Ovary (tissue), 10 donors: ENCODE measurements at regions of chr11 and their contacts with region 1.

Region 1: DNA sequence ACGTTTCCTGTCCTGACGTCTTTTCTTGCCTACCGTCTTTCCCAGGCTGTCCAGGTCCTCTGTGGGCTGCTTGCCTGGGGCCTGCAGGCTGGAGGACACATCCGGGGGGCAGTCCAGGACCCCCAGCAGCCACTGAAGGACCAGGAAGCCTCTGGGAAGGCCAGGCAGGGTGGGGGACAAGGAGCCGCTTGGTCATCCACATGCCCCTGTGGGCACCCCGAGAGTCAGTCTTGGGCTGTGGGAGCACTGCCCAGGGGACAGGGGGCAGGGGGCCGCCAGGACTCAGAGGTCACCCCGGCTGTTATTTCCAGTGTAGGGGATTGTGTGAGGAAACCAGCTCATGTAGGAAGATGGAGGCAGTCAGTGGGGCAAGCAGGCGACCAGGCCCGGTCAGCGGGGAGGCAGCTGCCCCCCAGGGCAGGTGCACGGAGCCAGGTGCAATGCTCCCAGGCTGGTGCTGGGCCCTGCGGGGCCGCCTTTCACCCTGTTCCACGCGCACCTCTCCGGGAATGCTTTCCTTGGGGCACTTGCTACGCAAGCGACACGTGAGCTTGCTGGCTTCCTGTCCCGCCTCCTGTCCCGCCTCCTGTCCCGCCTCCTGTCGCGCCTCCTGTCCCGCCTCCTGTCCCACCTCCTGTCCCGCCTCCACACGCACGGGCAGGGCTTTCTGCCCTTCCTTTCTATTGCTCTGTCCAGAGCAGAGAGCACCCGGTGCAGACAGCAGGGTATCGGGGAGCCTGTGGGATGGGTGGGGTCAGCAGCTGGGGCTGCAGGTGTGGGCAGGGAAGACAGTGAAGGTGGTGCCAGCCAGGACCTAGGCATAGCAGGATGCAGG is 39.5 kb downstream of the MUC5B start:
- DNase-seq: peak; percentile 86 to 91 (median 88)
- H3K4me3 ChIP-seq: peak overlapping the region; percentile 41
- H3K27ac ChIP-seq: peak overlapping the region; percentile 43 to 49
- H3K4me1 ChIP-seq: peaks cover 10% of the 10 kb centered on the region
- H3K27me3 ChIP-seq: no peaks in the 10 kb centered on the region
- CTCF ChIP-seq: no peak
- EP300 ChIP-seq: no peak
- POLR2A ChIP-seq: peak; percentile 52

Region 2: GRCh38 chr11:1532014-1532586 is 269.7 kb after region 1 on chr11:
- intact Hi-C with region 1: loop called in 1 of 4 experiments (anchors 10 kb)
- DNase-seq: no peak
- H3K4me3 ChIP-seq: no peak overlapping the region
- H3K27ac ChIP-seq: no peak overlapping the region
- H3K4me1 ChIP-seq: peaks cover 5% of the 10 kb centered on the region
- H3K27me3 ChIP-seq: no peaks in the 10 kb centered on the region
- CTCF ChIP-seq: no peak
- EP300 ChIP-seq: no peak
- POLR2A ChIP-seq: no peak